Activated CD4-positive, alpha-beta T cell treated with anti-CD3 and anti-CD28 coated beads for 36 hours (primary cell): ENCODE measurements at regions of chr7 and their contacts with region 1.

Region 1: GRCh38 chr7:102012996-102013461 is 195.6 kb downstream of the CUX1 start:
- DNase-seq: no peak
- ATAC-seq: no peak
- H3K4me3 Mint-ChIP-seq: no peak overlapping the region
- H3K27ac Mint-ChIP-seq: no peak overlapping the region
- H3K4me1 Mint-ChIP-seq: no peaks in the 10 kb centered on the region
- H3K27me3 Mint-ChIP-seq: no peaks in the 10 kb centered on the region

Region 2: DNA sequence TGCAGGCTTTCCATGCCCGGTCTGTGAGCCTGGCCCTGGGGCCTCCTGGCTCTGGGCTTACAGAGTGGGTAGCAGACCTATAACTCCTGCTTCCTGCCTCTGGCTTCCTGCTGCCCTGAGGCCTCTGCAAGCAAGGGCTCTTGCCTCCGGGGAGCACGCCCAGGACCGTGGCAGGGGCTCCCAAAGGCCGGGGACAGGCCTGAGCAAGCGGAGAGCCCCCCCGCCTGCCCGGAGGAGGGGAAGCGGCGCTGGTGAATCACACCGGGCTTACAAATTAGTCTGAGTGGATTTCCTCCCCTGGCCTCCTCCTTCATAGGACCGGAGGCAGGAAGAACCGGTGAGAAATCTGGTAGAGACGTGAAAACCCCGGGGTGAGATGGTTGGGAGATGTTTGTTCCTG is 382.4 kb before region 1 on chr7:
- CTCF ChIA-PET with region 1: no interaction called
- POLR2A ChIA-PET with region 1: no interaction called
- intact Hi-C with region 1: no loop called
- DNase-seq: no peak
- ATAC-seq: no peak
- H3K4me3 Mint-ChIP-seq: no peak overlapping the region
- H3K27ac Mint-ChIP-seq: no peak overlapping the region
- H3K4me1 Mint-ChIP-seq: no peaks in the 10 kb centered on the region
- H3K27me3 Mint-ChIP-seq: peaks cover 3% of the 10 kb centered on the region

Region 3: DNA sequence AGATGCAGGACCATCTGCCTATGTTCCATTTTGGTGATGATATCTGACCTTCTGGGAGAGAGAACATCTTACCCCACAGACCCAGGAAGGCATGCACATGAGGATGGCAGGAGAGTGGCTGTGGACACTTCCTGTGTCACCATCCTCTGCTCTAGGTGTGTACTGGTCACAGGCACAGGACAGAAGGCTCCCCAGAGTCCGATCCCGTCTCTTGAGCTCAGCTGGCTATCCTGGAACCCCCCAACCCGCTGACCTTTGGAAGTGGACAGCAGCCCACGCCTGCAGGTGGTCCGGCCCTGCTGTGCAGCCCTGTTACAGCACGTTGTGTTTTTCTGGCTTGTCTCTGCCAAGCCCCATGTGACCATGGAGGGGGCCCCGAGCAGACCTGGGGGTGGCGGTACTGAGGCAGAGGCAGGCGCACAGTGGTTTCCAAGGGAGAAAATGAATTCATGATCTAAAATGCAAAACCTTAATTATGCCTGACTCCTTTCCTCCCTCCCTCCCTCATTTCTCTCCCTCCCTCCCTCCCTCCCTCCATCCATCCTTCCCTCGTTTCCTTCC is 16.8 kb before region 1 on chr7:
- CTCF ChIA-PET with region 1: no interaction called
- POLR2A ChIA-PET with region 1: no interaction called
- intact Hi-C with region 1: loop called in 1 of 2 experiments (anchors 1 kb)
- DNase-seq: no peak
- ATAC-seq: no peak
- H3K4me3 Mint-ChIP-seq: no peak overlapping the region
- H3K27ac Mint-ChIP-seq: no peak overlapping the region
- H3K4me1 Mint-ChIP-seq: peaks cover 1% of the 10 kb centered on the region
- H3K27me3 Mint-ChIP-seq: no peaks in the 10 kb centered on the region